Activated B cell treated with CpG ODN at 0.5 μM for 24 hours (primary cell): ENCODE measurements at regions of chr12 and their contacts with region 1.

Region 1: GRCh38 chr12:104108755-104109445 is 29.1 kb downstream of the NFYB start:
- DNase-seq: peak; percentile 58
- ATAC-seq: peak; percentile 94
- H3K4me3 Mint-ChIP-seq: peak overlapping the region; percentile 11
- H3K27ac Mint-ChIP-seq: no peak overlapping the region
- H3K4me1 Mint-ChIP-seq: peaks cover 9% of the 10 kb centered on the region
- H3K27me3 Mint-ChIP-seq: no peaks in the 10 kb centered on the region
- CTCF ChIP-seq: peak; percentile 92

Region 2: GRCh38 chr12:103571286-103571685 is 537.6 kb before region 1 on chr12:
- CTCF ChIA-PET with region 1: no interaction called
- POLR2A ChIA-PET with region 1: no interaction called
- intact Hi-C with region 1: loop called (anchors 5 kb)
- DNase-seq: no peak
- ATAC-seq: no peak
- H3K4me3 Mint-ChIP-seq: no peak overlapping the region
- H3K27ac Mint-ChIP-seq: no peak overlapping the region
- H3K4me1 Mint-ChIP-seq: peaks cover 6% of the 10 kb centered on the region
- H3K27me3 Mint-ChIP-seq: peaks cover 71% of the 10 kb centered on the region
- CTCF ChIP-seq: no peak

Region 3: DNA sequence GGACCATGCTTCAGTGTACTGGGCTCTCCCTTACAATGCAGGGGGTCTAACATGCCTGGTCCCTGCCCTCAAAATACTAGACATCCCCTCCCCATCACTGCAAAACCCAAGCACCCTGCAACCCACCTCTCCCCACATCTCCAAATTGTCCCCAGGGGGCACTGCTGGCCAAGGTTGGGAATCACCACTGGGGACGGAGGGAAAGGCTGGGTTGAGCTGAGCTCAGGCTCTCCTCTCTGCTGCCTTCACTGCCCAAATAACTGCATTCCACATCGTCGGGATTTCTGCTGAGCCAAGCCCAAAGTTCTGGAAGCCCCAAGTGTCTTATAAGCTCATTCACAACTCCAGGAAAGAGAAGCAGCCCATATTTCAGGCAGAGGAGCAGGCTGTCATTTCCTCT is 337.4 kb before region 1 on chr12:
- CTCF ChIA-PET with region 1: interaction called, 19 read pairs
- POLR2A ChIA-PET with region 1: no interaction called
- intact Hi-C with region 1: loop called (anchors 1 kb)
- DNase-seq: no peak
- ATAC-seq: no peak
- H3K4me3 Mint-ChIP-seq: no peak overlapping the region
- H3K27ac Mint-ChIP-seq: no peak overlapping the region
- H3K4me1 Mint-ChIP-seq: no peaks in the 10 kb centered on the region
- H3K27me3 Mint-ChIP-seq: no peaks in the 10 kb centered on the region
- CTCF ChIP-seq: no peak

Region 4: GRCh38 chr12:103877934-103878510 is 230.9 kb before region 1 on chr12:
- CTCF ChIA-PET with region 1: interaction called, 41 read pairs
- POLR2A ChIA-PET with region 1: no interaction called
- intact Hi-C with region 1: loop called (anchors 1 kb)
- DNase-seq: no peak
- ATAC-seq: peak; percentile 53
- H3K4me3 Mint-ChIP-seq: no peak overlapping the region
- H3K27ac Mint-ChIP-seq: no peak overlapping the region
- H3K4me1 Mint-ChIP-seq: peaks cover 24% of the 10 kb centered on the region
- H3K27me3 Mint-ChIP-seq: no peaks in the 10 kb centered on the region
- CTCF ChIP-seq: peak; percentile 47

Region 5: GRCh38 chr12:103884316-103884715 is 224.6 kb before region 1 on chr12:
- CTCF ChIA-PET with region 1: interaction called, 41 read pairs
- POLR2A ChIA-PET with region 1: no interaction called
- intact Hi-C with region 1: loop called (anchors 1 kb)
- DNase-seq: no peak
- ATAC-seq: no peak
- H3K4me3 Mint-ChIP-seq: no peak overlapping the region
- H3K27ac Mint-ChIP-seq: no peak overlapping the region
- H3K4me1 Mint-ChIP-seq: peaks cover 17% of the 10 kb centered on the region
- H3K27me3 Mint-ChIP-seq: no peaks in the 10 kb centered on the region
- CTCF ChIP-seq: no peak

Region 6: DNA sequence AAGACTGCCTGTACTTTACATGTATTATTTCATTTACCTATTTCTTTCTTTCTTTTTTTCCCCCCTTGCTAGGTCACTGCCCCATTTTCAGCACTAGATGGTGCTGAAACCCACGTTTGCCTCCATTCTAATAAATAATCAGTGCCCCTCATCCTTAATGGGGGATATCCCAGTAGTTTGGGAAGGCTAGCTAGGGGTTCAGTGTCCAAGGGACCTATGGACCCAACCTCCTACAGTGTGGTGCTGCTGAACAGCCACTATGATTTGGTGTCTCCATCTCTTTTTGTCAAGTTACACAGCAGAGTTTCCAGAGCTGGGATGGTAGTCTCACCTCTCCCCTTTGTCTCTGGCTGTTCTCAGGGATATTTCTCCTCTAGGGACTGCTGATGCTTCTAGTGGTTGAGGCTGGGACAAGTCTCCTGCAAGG is 51.1 kb before region 1 on chr12:
- CTCF ChIA-PET with region 1: interaction called, 65 read pairs
- POLR2A ChIA-PET with region 1: no interaction called
- intact Hi-C with region 1: loop called (anchors 1 kb)
- DNase-seq: no peak
- ATAC-seq: no peak
- H3K4me3 Mint-ChIP-seq: no peak overlapping the region
- H3K27ac Mint-ChIP-seq: no peak overlapping the region
- H3K4me1 Mint-ChIP-seq: no peaks in the 10 kb centered on the region
- H3K27me3 Mint-ChIP-seq: peaks cover 26% of the 10 kb centered on the region
- CTCF ChIP-seq: no peak

Region 7: DNA sequence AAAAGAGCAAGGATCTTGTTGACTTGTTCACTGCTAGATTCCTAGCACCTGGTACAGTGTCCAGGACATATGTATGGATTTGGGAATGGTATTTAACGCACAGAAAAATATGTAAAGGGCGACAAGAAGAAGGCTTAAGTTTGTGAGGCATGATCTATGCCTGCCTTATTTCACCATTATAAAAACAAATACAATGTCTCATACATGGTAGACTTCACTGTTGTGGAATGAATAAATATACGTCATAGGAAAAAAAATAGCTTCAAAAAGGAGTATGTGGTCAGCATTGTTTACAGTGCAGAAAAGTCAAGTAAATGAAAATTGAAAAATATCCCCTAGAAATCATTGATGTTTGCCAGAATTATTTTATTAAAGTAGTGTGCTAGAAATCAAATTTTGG is 14.6 kb before region 1 on chr12:
- CTCF ChIA-PET with region 1: interaction called, 11 read pairs
- POLR2A ChIA-PET with region 1: no interaction called
- intact Hi-C with region 1: no loop called
- DNase-seq: no peak
- ATAC-seq: no peak
- H3K4me3 Mint-ChIP-seq: no peak overlapping the region
- H3K27ac Mint-ChIP-seq: no peak overlapping the region
- H3K4me1 Mint-ChIP-seq: no peaks in the 10 kb centered on the region
- H3K27me3 Mint-ChIP-seq: no peaks in the 10 kb centered on the region
- CTCF ChIP-seq: no peak

Region 8: DNA sequence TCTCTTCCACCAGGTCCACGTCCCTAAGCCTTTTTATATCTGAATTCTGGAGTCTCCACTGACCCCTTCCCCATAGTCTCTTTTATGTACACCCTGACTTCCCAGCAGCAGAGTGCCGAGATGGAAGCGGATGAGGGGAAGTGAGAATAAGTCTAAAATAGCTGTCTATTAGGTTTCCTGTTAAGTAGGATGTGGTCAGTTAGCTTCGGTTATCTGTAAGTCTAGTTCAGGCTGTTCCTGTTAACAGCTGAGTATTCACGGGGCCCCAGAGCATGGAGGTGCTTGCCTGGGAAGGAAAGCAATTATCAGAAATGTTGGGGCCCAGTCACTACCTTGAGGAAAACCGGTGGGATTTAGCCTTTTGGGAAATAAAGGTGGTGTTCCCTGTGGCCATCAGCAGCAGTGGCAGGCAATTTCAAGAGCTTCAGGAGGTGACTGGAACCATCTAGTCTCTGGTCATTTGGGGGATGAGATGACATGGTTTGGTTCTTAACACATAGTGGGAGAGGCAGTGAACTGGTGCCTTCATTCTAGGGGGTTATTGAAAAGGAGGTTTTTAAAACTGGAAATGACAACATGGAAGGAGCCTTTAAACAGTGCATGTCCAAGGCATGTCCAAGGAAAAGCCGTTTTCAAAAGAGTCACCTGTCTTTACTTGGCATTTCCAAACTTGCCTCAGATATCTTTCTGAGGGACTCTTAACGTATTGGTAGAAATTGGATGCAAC is 369.7 kb after region 1 on chr12:
- CTCF ChIA-PET with region 1: no interaction called
- POLR2A ChIA-PET with region 1: no interaction called
- intact Hi-C with region 1: no loop called
- DNase-seq: no peak
- ATAC-seq: peak; percentile 84
- H3K4me3 Mint-ChIP-seq: peak overlapping the region; percentile 87
- H3K27ac Mint-ChIP-seq: peak overlapping the region; percentile 90
- H3K4me1 Mint-ChIP-seq: peaks cover 92% of the 10 kb centered on the region
- H3K27me3 Mint-ChIP-seq: no peaks in the 10 kb centered on the region
- CTCF ChIP-seq: no peak